Cardiac septum (tissue), 1 donor: ENCODE measurements at regions of chr11 and their contacts with region 1.

Region 1: DNA sequence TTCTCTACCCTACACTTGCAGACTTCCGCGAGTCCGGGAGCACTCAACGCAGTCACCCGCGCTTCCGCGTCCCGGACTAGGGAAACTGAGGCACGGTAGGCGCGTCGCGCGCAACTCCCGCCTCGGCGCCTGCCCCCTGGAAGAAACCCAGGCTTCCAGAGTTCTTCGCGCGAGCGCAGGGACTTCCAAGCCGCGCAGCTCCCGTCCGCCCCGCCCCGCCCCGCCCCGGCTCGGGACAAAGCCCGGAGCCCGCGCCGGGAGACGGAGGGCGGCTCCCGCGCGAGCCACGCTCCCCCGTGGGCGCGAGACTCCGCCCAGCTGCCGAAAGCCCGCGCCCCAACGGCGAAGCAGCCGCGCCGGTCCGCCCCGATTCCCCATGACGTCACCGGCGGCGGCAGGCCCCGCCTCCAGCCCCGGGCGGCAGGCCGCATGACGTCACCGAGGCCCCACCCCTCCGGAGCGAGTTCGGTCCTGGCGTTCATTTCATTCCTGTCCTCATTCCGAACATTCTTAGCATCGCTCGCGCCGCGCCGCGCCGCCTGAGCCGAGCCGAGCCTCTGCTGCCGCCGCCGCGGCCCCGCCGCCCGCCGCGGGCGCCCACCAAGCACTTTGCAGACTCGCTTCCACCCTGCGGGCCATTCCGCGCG is at the start of gene TEAD1:
- DNase-seq: peak; percentile 97
- total RNA-seq, gene TEAD1: 103 TPM

Region 2: DNA sequence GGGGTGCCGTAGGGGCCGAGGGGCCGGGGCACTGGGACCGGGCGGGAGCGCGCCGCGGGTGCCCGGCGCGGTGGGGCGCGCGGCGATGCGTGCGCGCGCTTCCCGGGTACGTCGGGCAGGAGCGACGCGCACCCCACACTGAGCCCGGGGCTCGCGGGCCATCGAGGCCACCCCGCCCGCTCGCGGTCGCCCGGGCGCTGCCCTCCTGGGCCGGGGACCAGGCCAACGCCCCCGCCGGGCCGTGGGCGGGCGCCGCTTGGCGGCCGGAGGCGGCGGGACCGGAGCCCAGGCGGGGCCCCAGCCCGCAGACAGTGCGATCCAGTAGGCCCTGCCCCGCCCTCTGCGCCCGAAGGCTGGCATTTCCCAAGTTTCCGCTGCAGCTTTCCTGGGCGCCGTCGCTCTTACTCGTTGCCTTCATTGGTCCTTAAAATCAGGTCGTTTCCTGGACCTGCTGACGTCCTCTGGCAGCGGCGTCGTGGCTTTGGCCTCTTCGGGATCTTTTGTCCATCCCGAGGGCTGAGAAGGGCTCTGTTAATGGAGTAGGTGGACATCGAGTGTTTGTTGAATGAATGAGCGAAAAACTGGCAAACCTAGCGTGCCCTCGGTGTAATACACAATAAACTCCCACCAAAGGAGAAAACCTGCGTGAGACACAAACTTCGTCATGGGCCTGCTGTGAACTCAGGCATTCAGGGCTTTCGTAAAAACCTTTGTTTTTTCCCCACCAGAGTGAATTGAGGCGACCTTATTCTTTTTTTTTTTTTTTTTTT is 296.0 kb before region 1 on chr11:
- intact Hi-C with region 1: loop called (anchors 5 kb)
- DNase-seq: peak; percentile 84

Region 3: GRCh38 chr11:12411806-12412727 is 262.0 kb before region 1 on chr11:
- intact Hi-C with region 1: loop called (anchors 5 kb)
- DNase-seq: no peak

Region 4: GRCh38 chr11:12449961-12450715 is 223.9 kb before region 1 on chr11:
- intact Hi-C with region 1: no loop called
- DNase-seq: no peak

Region 5: DNA sequence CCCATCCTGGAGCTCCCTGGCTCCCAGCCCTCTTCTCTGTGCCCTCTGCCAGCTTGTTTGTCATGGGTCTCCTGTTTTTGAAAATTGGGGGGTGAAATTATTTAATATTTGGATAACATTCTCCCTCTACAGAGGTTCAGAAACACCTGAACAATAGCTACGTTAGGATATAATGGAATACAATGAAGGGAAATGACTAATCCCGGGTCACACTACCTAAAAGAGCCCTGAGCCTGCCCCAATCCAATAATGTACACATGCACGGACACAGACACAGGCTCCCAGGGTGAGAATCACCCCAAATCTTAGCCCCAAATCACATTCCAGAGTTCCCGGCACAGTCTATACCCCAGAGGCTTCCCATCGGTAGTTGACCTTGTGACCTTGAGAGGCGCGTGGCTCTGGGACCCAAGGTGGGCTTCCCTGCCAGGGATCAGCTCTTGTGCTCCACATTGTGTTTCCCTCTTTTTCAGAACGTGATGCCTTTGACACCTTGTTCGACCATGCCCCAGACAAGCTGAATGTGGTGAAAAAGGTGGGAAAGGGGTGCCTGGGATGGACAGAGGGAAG is 161.1 kb before region 1 on chr11:
- intact Hi-C with region 1: no loop called
- DNase-seq: no peak

Region 6: DNA sequence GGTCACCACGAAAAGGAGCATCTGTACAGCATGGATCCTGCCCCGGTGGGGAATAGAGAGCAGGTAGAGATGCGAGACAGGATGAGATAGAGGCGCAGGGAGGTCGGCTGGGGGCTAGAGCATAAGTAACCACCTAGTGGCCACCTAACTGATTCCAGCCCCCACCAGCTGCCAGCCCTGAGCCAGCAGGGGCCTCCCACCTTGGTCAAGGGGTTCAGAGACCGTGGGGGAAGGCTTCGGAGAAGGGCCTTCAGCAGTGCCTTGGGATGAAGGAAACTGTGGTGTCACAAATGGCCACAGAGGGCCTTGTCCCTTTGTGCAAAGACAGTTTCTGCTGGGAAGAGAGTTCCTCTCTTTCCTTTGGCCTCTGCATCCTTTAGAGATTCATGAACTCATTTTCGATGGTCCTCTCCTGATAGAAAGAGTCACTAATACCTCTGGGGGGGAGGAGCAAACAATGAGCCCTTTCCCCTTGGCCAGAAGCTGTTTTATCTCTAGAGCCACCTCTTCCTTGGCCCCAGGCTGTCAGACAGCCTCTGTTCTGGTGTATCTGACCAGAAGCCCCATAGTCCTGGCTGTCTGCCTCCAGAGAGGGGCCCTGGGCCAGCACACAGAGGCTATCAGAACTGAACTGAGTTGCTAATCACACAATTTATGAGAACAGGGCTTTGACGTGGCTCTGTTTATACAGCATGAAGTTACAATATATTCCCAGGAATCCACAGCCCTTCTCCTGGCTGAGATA is 150.7 kb before region 1 on chr11:
- intact Hi-C with region 1: loop called (anchors 5 kb)
- DNase-seq: no peak

Region 7: GRCh38 chr11:12693479-12694181 is 19.6 kb after region 1 on chr11:
- intact Hi-C with region 1: loop called (anchors 2 kb)
- DNase-seq: no peak

Region 8: DNA sequence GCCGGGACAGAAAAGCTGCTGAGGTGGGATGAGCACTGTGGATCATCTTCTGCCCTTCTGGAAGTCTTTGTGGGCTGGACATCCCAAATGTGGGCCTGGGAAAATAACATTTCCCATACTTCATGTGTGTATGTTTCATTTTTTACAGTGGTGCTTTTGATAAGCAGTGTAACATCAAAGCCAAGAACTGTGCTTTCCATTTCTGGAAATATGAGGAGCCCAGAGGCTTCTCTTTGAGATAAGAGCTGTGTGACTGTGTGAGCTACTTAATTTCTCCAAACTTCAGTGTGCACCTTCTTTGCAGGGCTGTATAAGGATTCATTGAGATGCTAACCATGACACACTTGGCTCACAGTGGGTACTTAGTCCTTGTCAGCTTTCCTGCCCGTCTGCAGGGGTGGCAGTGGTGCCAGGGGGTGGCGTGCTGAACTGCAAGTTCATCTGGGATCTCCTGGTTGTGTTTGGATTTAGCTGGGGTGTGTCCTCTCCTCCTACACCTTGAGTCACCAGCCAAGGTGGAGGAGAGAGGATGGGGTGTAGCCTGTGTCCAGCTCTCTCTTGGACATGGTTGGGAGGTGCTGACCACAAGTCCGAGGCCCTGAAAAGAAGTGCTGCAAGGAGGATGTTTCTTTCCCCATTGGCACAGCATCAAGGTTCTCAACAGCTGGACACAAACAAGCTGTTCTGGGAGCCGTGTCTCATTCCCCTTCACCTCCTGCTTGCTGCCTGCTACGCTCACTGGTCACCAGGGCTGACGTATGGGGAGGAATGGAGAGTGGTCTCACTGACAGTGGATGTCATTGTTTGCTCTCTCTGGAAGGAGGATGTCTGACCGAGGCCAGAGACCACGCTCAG is 139.6 kb after region 1 on chr11:
- intact Hi-C with region 1: loop called (anchors 5 kb)
- DNase-seq: no peak

Region 9: GRCh38 chr11:12888525-12889158 is 214.6 kb after region 1 on chr11:
- intact Hi-C with region 1: loop called (anchors 5 kb)
- DNase-seq: peak; percentile 85